IMR-90 (cell line): ENCODE measurements at regions of chr5 and their contacts with region 1.

Region 1: DNA sequence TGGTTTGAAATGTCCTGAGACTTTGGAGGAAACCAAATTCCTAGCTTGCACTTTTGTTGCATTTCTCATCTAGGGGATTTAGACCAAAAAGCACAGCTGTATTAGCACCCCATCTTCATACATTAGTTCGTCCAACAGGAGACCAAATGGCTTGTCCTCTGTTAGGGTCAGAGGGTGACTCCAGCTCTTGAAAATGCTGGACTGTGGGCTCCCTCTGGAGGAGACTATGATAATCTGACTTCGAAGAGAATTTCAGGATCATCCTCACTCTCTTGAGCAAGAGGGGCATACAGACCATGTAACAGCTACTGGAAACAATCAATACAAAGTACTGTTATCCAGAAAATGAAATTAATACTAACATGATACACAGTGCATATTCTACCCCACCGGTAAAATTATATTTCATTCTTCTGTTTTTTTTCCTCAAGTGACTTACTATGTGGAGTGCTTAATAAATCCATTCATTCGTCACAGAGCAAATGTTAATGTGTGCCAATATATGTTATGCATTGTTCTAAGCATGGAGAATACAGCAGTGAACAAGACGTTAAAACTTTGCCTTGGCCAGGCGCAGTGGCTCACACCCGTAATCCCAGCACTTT is 63.7 kb upstream of the PPP2CA start:
- DNase-seq: peak; percentile 83
- ATAC-seq: peak; percentile 99
- H3K4me3 ChIP-seq: no peak overlapping the region
- H3K27ac ChIP-seq: no peak overlapping the region
- H3K4me1 ChIP-seq: no peaks in the 10 kb centered on the region
- H3K27me3 ChIP-seq: no peaks in the 10 kb centered on the region; the same call in 1 of the 2 replicates
- CTCF ChIP-seq: peak; percentile 92
- POLR2A ChIP-seq: peak; percentile 63
- RAD21 ChIP-seq: peak; percentile 100

Region 2: DNA sequence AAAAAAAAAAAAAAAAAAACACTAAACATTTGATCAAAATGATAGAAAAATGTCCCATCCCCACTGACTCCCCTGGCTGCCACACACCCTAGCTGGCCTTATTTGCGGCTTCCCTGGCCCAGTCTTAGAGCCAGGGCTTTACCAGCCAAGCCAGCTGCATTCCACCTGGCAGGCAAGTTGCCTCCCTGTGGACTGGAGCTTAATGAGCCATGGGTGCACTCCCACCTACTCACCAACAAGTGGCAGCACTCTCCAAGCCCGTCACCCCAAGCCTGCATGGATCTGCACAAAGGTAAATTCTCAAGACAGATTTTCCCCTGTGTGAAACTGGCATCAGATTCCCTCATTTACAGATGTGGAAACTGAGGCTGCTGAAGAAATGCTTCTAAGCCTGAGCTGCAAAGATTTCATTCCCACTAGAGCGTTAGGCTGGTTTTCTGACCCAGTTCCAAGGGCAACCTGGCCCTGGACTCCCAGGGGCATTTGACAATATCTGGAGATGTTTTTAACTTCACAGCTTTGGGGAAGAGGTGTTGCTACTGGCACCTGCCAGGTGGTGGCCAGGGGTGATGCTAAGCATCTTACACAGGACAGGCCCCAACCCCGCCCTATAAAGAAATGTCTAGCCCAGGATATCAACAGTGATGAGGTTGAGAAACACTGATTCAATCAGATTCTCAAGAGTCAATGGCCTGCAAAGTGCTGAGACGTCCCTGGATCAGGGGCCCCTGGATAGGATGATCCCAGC is 262.9 kb before region 1 on chr5:
- CTCF ChIA-PET with region 1: no interaction called
- POLR2A ChIA-PET with region 1: no interaction called
- dilution Hi-C with region 1: no loop called
- in situ Hi-C with region 1: loop called (anchors 25 kb)
- intact Hi-C with region 1: no loop called
- DNase-seq: peak; percentile 63
- ATAC-seq: peak; percentile 52
- H3K4me3 ChIP-seq: no peak overlapping the region
- H3K27ac ChIP-seq: no peak overlapping the region
- H3K4me1 ChIP-seq: peaks cover 6% of the 10 kb centered on the region
- H3K27me3 ChIP-seq: peaks cover 34% of the 10 kb centered on the region
- CTCF ChIP-seq: peak; percentile 44
- POLR2A ChIP-seq: no peak
- RAD21 ChIP-seq: peak; percentile 37

Region 3: DNA sequence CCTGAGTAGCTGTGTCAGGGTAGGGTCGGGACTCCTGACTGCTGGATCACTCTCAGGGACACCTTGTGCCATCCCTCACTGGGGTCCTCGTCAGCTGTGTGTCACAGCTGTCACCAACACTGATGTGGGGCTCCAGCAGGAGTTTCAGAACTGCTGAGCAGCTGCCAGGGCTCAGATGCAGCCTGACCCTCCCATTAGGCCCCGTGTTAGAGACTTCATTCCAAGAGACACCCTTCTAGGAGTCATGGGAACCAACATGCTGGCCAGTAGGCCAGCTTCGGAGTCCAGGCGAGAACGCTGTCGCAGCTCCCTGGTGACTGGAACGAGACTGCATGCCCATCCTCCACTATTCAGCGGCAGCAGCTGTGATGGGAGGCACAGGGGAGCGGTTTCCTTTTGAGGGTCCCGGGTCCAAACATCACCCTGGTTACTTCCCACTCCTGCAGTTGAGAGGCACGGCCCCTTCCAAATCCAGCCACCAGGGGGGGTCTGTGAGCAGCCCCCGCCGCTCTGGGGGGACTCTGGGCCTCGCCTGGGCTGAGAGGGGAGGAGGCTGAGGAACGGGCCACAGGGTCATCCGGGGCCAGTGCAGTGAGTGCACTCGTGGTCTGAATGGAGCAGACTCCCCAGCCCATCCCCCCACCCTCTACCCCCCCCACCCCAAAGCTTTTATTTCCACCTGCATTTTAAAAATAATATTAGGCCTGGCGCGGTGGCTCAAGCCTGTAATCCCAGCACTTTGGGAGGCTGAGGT is 187.7 kb before region 1 on chr5:
- CTCF ChIA-PET with region 1: no interaction called
- POLR2A ChIA-PET with region 1: no interaction called
- dilution Hi-C with region 1: no loop called
- in situ Hi-C with region 1: no loop called
- intact Hi-C with region 1: loop called (anchors 2 kb)
- DNase-seq: no peak
- ATAC-seq: peak; percentile 90
- H3K4me3 ChIP-seq: no peak overlapping the region
- H3K27ac ChIP-seq: no peak overlapping the region
- H3K4me1 ChIP-seq: peaks cover 4% of the 10 kb centered on the region
- H3K27me3 ChIP-seq: peaks cover 11% of the 10 kb centered on the region
- CTCF ChIP-seq: peak; percentile 74
- POLR2A ChIP-seq: no peak
- RAD21 ChIP-seq: peak; percentile 67

Region 4: GRCh38 chr5:134184155-134185135 is 105.2 kb before region 1 on chr5:
- CTCF ChIA-PET with region 1: interaction called, 21 read pairs
- POLR2A ChIA-PET with region 1: no interaction called
- dilution Hi-C with region 1: no loop called
- in situ Hi-C with region 1: loop called (anchors 5 kb)
- intact Hi-C with region 1: loop called (anchors 1 kb)
- DNase-seq: peak; percentile 56
- ATAC-seq: peak; percentile 99
- H3K4me3 ChIP-seq: no peak overlapping the region
- H3K27ac ChIP-seq: no peak overlapping the region
- H3K4me1 ChIP-seq: no peaks in the 10 kb centered on the region
- H3K27me3 ChIP-seq: no peaks in the 10 kb centered on the region
- CTCF ChIP-seq: peak; percentile 89
- POLR2A ChIP-seq: no peak
- RAD21 ChIP-seq: peak; percentile 93